ENCODE measurements at regions of chr3 and their contacts with region 1.

Region 1: GRCh38 chr3:193831495-193832455 is 238.8 kb downstream of the OPA1 start:
- DNase-seq: peak; percentile 87 to 97
- H3K4me3 ChIP-seq: no peak overlapping the region
- H3K27ac ChIP-seq: peak overlapping the region; percentile 96
- H3K4me1 ChIP-seq: peaks cover 89% of the 10 kb centered on the region
- H3K27me3 ChIP-seq: no peaks in the 10 kb centered on the region
- CTCF ChIP-seq: no peak

Region 2: GRCh38 chr3:193665370-193665989 is 166.3 kb before region 1 on chr3:
- CTCF ChIA-PET with region 1: no interaction called
- POLR2A ChIA-PET with region 1: no interaction called
- intact Hi-C with region 1: loop called (anchors 5 kb)
- DNase-seq: peak in 1 of 2 experiments; percentile 70
- H3K4me3 ChIP-seq: no peak overlapping the region
- H3K27ac ChIP-seq: no peak overlapping the region
- H3K4me1 ChIP-seq: no peaks in the 10 kb centered on the region
- H3K27me3 ChIP-seq: no peaks in the 10 kb centered on the region
- CTCF ChIP-seq: peak; percentile 93

Region 3: DNA sequence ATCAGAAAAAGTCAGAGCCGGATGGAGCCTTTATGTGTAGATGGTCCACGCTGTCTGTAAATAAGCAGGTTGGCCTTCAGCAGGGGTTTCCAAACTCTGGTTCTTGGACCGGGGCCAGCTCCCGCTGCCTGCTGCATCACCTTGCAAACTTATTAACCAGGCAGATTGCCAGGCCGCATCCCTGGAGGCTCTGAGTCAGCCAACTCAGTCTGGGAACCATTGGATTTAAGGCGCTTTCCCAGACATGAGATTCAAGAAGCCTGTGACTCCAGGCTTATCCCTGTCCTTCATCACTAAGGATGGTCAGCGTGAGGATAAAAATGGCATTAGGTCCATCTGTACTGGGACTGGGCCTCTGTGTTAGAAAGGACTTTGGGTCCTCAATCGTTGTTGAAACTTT is 26.3 kb before region 1 on chr3:
- CTCF ChIA-PET with region 1: no interaction called
- POLR2A ChIA-PET with region 1: interaction called, 3 read pairs
- intact Hi-C with region 1: loop called (anchors 1 kb)
- DNase-seq: peak; percentile 95 to 98
- H3K4me3 ChIP-seq: no peak overlapping the region
- H3K27ac ChIP-seq: peak overlapping the region; percentile 61
- H3K4me1 ChIP-seq: peaks cover 21% of the 10 kb centered on the region
- H3K27me3 ChIP-seq: no peaks in the 10 kb centered on the region
- CTCF ChIP-seq: no peak

Region 4: GRCh38 chr3:193851941-193852674 is 20.3 kb after region 1 on chr3:
- CTCF ChIA-PET with region 1: no interaction called
- POLR2A ChIA-PET with region 1: no interaction called
- intact Hi-C with region 1: loop called (anchors 1 kb)
- DNase-seq: peak; percentile 82 to 98
- H3K4me3 ChIP-seq: peak overlapping the region; percentile 49
- H3K27ac ChIP-seq: peak overlapping the region; percentile 98
- H3K4me1 ChIP-seq: peaks cover 70% of the 10 kb centered on the region
- H3K27me3 ChIP-seq: no peaks in the 10 kb centered on the region
- CTCF ChIP-seq: no peak

Region 5: GRCh38 chr3:193982258-193982659 is 150.5 kb after region 1 on chr3:
- CTCF ChIA-PET with region 1: no interaction called
- POLR2A ChIA-PET with region 1: no interaction called
- intact Hi-C with region 1: loop called (anchors 1 kb)
- DNase-seq: peak in 1 of 2 experiments; percentile 97
- H3K4me3 ChIP-seq: no peak overlapping the region
- H3K27ac ChIP-seq: no peak overlapping the region
- H3K4me1 ChIP-seq: 0 out of 2 replicates have a peak, but pooled peaks cover 6% of the 10 kb centered on the region
- H3K27me3 ChIP-seq: no peaks in the 10 kb centered on the region
- CTCF ChIP-seq: no peak

Region 6: GRCh38 chr3:194089357-194090177 is 257.8 kb after region 1 on chr3:
- CTCF ChIA-PET with region 1: no interaction called
- POLR2A ChIA-PET with region 1: interaction called, 4 read pairs
- intact Hi-C with region 1: loop called (anchors 1 kb)
- DNase-seq: peak; percentile 98 to 100
- H3K4me3 ChIP-seq: peak overlapping the region; percentile 16; the same call in 1 of the 2 replicates
- H3K27ac ChIP-seq: peak overlapping the region; percentile 98
- H3K4me1 ChIP-seq: peaks cover 48% of the 10 kb centered on the region
- H3K27me3 ChIP-seq: no peaks in the 10 kb centered on the region
- CTCF ChIP-seq: no peak